ENCODE measurements at regions of chr1 and their contacts with region 1.

Region 1: DNA sequence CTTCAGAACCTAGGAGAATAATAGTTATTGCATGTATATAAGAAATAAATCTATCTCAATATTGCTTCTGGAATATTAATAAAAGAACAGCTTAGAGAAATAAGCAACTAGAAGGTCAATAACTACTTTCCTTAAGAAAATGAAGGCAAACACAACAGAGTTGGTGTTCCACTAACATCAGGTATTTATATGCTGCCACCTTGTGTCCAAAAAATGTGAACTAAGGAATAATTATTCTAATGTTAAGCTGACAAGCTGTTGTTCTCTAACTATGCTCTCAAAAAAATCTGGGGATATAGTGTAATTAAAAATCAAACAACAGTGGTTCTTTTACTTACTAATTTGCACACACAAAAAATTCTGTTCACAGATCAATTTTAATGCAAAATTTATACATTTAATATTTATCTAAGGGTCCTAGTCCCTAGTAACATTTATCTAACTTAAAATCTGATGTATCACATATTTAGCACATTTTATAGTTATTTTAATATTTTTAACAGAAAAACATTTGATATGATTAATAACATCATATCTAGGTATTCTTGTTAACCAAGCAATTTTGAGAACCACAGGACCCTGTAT is 39.6 kb downstream of the UCHL5 start:
- DNase-seq: no peak
- ATAC-seq: peak; percentile 76
- H3K4me3 ChIP-seq: no peak overlapping the region
- H3K27ac ChIP-seq: no peak overlapping the region
- H3K4me1 ChIP-seq: no peaks in the 10 kb centered on the region
- H3K27me3 ChIP-seq: no peaks in the 10 kb centered on the region
- CTCF ChIP-seq: peak; percentile 22 to 53 (median 33); a peak in 4 of 6 replicates
- EP300 ChIP-seq: no peak
- POLR2A ChIP-seq: no peak
- RAD21 ChIP-seq: peak; percentile 62

Region 2: GRCh38 chr1:192998536-192998935 is 21.0 kb before region 1 on chr1:
- CTCF ChIA-PET with region 1: interaction called, 12 read pairs
- POLR2A ChIA-PET with region 1: no interaction called
- RAD21 ChIA-PET with region 1: interaction called, 3 read pairs
- SMC1A ChIA-PET with region 1: interaction called, 7 read pairs
- in situ Hi-C with region 1: no loop called
- intact Hi-C with region 1: no loop called
- DNase-seq: no peak
- ATAC-seq: peak; percentile 68
- H3K4me3 ChIP-seq: no peak overlapping the region
- H3K27ac ChIP-seq: no peak overlapping the region
- H3K4me1 ChIP-seq: no peaks in the 10 kb centered on the region
- H3K27me3 ChIP-seq: no peaks in the 10 kb centered on the region
- CTCF ChIP-seq: peak; percentile 25 to 46 (median 45); a peak in 4 of 6 replicates
- EP300 ChIP-seq: no peak
- POLR2A ChIP-seq: no peak
- RAD21 ChIP-seq: peak; percentile 27; the same call in 1 of the 2 replicates

Region 3: GRCh38 chr1:193005785-193006184 is 13.7 kb before region 1 on chr1:
- CTCF ChIA-PET with region 1: interaction called, 11 read pairs
- POLR2A ChIA-PET with region 1: interaction called, 3 read pairs
- RAD21 ChIA-PET with region 1: interaction called, 4 read pairs
- SMC1A ChIA-PET with region 1: interaction called, 7 read pairs
- in situ Hi-C with region 1: no loop called
- intact Hi-C with region 1: no loop called
- DNase-seq: no peak
- ATAC-seq: no peak
- H3K4me3 ChIP-seq: no peak overlapping the region
- H3K27ac ChIP-seq: no peak overlapping the region
- H3K4me1 ChIP-seq: no peaks in the 10 kb centered on the region
- H3K27me3 ChIP-seq: no peaks in the 10 kb centered on the region
- CTCF ChIP-seq: no peak
- EP300 ChIP-seq: no peak
- POLR2A ChIP-seq: no peak
- RAD21 ChIP-seq: no peak

Region 4: DNA sequence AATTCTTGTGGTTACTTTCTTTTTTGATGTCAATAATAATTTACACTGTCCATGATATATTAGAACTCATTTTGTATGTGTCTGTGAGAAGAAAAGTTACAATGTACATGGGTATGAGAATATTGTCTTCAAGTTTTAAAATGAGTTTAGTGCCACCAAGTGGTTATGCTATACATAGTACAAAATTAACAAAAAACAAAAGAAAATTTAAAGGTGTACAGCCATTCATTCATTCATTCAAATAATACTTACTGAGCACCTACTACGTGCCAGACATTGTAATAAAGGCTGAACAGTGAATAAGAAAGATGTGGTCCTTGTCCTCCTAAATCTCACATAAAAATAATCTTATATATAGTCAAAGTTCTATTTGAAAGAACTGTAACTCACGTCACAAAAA is 11.9 kb after region 1 on chr1:
- CTCF ChIA-PET with region 1: interaction called, 15 read pairs
- POLR2A ChIA-PET with region 1: no interaction called
- RAD21 ChIA-PET with region 1: interaction called, 6 read pairs
- SMC1A ChIA-PET with region 1: interaction called, 17 read pairs
- in situ Hi-C with region 1: no loop called
- intact Hi-C with region 1: no loop called
- DNase-seq: no peak
- ATAC-seq: peak; percentile 84
- H3K4me3 ChIP-seq: no peak overlapping the region
- H3K27ac ChIP-seq: no peak overlapping the region
- H3K4me1 ChIP-seq: no peaks in the 10 kb centered on the region
- H3K27me3 ChIP-seq: no peaks in the 10 kb centered on the region
- CTCF ChIP-seq: peak in 2 of 3 experiments; percentile 24; a peak in 3 of 6 replicates
- EP300 ChIP-seq: no peak
- POLR2A ChIP-seq: no peak
- RAD21 ChIP-seq: 0 out of 2 replicates have a peak, but pooled peaks have one; percentile 7

Region 5: DNA sequence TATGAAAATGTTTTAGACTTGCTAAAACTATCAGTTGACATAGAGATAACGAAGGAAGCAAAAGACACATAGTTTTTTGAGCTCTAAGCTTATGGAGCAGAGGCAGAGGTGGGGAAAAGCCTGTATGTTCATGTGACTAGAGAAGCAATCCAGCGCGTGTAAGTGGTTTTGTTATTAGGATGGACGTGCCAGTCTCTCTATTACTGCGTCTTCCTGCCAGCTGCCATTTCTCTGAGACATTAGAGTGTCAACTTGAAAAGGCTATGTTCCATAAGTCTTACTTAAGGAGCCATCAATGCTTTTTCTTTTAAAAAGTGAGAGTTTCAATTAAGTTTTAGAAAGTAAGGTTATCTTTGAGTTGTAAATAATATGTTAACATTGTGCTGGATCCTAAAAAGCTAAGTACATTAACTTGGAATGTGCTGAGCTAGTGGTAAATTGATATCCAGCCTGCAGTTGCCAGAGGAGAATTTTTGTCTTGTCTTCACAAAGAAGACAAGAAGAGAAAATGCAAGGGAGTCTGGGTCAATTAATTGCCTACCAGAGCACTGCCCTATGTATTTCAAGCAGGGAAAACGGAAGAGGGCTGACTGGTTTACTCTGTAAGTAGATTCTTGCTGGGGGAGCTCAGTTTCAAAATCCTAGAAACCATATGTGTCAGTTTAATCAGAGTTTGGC is 328.7 kb after region 1 on chr1:
- CTCF ChIA-PET with region 1: no interaction called
- POLR2A ChIA-PET with region 1: no interaction called
- RAD21 ChIA-PET with region 1: no interaction called
- SMC1A ChIA-PET with region 1: no interaction called
- in situ Hi-C with region 1: no loop called
- intact Hi-C with region 1: no loop called
- DNase-seq: no peak
- ATAC-seq: no peak
- H3K4me3 ChIP-seq: no peak overlapping the region
- H3K27ac ChIP-seq: no peak overlapping the region
- H3K4me1 ChIP-seq: no peaks in the 10 kb centered on the region
- H3K27me3 ChIP-seq: no peaks in the 10 kb centered on the region
- CTCF ChIP-seq: no peak
- EP300 ChIP-seq: no peak
- POLR2A ChIP-seq: no peak
- RAD21 ChIP-seq: no peak

Measured in GM12878 (cell line).